Heart left ventricle (tissue), 16 donors: ENCODE measurements at regions of chr7 and their contacts with region 1.

Region 1: DNA sequence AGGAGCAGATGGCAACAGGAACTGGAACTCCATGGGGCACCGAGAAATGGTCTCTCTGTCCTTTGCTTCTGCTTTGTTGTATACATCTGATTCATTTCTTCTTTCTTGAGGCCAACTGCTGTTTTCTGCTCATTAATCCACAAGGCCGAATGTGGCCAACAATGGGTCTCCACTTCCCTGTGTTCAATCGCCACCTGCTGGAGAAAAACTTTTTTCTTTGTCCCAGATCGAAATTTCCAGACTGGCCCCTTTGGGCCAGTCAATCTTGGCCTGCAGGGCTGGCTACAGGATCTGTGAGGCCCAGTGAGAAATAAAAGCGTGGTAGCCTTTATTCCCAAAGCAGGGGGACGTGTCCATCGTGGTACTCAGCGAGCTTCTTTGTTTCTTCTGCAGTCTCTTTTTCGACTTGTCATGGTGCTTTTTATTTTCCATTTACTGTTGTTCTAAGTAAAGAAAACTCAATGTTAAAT is 58.8 kb downstream of the PARP12 start:
- DNase-seq: no peak
- ATAC-seq: no peak
- H3K4me3 ChIP-seq: no peak overlapping the region
- H3K27ac ChIP-seq: no peak overlapping the region
- H3K4me1 ChIP-seq: no peaks in the 10 kb centered on the region
- H3K27me3 ChIP-seq: no peaks in the 10 kb centered on the region
- CTCF ChIP-seq: peak in 10 of 12 donors; percentile 23 to 53 (median 43)
- POLR2A ChIP-seq: no peak

Region 2: GRCh38 chr7:139431010-139431409 is 572.9 kb before region 1 on chr7:
- intact Hi-C with region 1: loop called in 1 of 10 experiments (anchors 10 kb)
- DNase-seq: no peak
- ATAC-seq: peak in 1 of 4 donors; percentile 17
- H3K4me3 ChIP-seq: no peak overlapping the region
- H3K27ac ChIP-seq: peak overlapping the region in 4 of 12 donors; percentile 9 to 45 (median 24)
- H3K4me1 ChIP-seq: peaks cover 0 to 33% (median 16%) of the 10 kb centered on the region in 12 donors
- H3K27me3 ChIP-seq: no peaks in the 10 kb centered on the region
- CTCF ChIP-seq: no peak
- POLR2A ChIP-seq: no peak

Region 3: DNA sequence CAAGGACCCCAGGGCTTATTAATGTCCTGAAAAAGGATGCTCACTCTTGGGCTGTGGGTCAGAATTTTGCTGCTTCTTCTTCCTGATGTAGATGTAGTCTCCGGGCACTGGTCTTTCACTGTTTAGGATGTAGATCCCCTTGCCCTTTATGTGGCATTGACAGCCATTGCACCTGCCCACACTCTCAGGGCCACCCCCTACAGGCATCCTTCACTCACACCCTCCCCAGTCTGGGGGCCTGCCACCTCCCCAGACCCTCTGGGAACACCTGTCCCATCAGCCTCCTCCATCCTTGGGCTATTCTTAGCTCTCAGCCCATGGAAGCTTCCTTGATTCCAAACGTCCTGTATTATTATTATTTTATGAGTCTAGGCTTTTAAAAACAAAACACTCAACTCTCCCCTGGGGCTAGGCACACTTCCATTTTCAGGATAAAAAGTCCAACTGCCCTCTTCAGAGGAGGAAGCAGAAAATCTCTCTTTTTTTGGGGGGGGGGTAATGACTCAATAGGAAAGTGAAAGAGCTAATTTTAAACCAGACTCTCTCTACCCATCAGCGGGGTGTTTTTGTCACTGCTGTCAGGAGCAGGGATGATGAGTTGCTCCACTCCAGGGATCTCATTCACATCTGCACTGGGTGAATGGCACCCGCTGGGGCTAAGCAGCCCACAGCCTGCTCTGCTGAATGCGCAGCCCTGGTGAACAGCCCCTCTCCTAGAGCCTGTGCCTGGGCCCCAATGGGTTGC is 508.9 kb before region 1 on chr7:
- intact Hi-C with region 1: loop called (anchors 1 to 5 kb)
- DNase-seq: no peak
- ATAC-seq: peak in 1 of 4 donors; percentile 20
- H3K4me3 ChIP-seq: no peak overlapping the region
- H3K27ac ChIP-seq: no peak overlapping the region
- H3K4me1 ChIP-seq: peaks cover 0 to 15% (median 0%) of the 10 kb centered on the region in 12 donors
- H3K27me3 ChIP-seq: peaks cover 0 to 8% (median 0%) of the 10 kb centered on the region in 9 donors
- CTCF ChIP-seq: no peak
- POLR2A ChIP-seq: no peak

Region 4: GRCh38 chr7:139505563-139505962 is 498.4 kb before region 1 on chr7:
- intact Hi-C with region 1: loop called in 6 of 10 experiments (anchors 1 to 5 kb)
- DNase-seq: no peak
- ATAC-seq: no peak
- H3K4me3 ChIP-seq: no peak overlapping the region
- H3K27ac ChIP-seq: no peak overlapping the region
- H3K4me1 ChIP-seq: no peaks in the 10 kb centered on the region
- H3K27me3 ChIP-seq: peaks cover 0 to 4% (median 0%) of the 10 kb centered on the region in 9 donors
- CTCF ChIP-seq: peak in 3 of 12 donors; percentile 8 to 19 (median 12)
- POLR2A ChIP-seq: no peak

Region 5: GRCh38 chr7:139602143-139602722 is 401.7 kb before region 1 on chr7:
- intact Hi-C with region 1: loop called in 7 of 10 experiments (anchors 1 to 5 kb)
- DNase-seq: no peak
- ATAC-seq: peak in 3 of 4 donors; percentile 65 to 71 (median 68)
- H3K4me3 ChIP-seq: no peak overlapping the region
- H3K27ac ChIP-seq: no peak overlapping the region
- H3K4me1 ChIP-seq: peaks cover 0 to 32% (median 0%) of the 10 kb centered on the region in 12 donors
- H3K27me3 ChIP-seq: no peaks in the 10 kb centered on the region
- CTCF ChIP-seq: peak; percentile 30 to 64 (median 50)
- POLR2A ChIP-seq: no peak

Region 6: GRCh38 chr7:139620676-139621344 is 383.1 kb before region 1 on chr7:
- intact Hi-C with region 1: loop called in 8 of 10 experiments (anchors 1 to 10 kb)
- DNase-seq: peak in 1 of 5 donors; percentile 40
- ATAC-seq: peak in 1 of 4 donors; percentile 44
- H3K4me3 ChIP-seq: no peak overlapping the region
- H3K27ac ChIP-seq: no peak overlapping the region
- H3K4me1 ChIP-seq: peaks cover 0 to 9% (median 0%) of the 10 kb centered on the region in 12 donors
- H3K27me3 ChIP-seq: no peaks in the 10 kb centered on the region
- CTCF ChIP-seq: peak; percentile 38 to 63 (median 52)
- POLR2A ChIP-seq: no peak

Region 7: DNA sequence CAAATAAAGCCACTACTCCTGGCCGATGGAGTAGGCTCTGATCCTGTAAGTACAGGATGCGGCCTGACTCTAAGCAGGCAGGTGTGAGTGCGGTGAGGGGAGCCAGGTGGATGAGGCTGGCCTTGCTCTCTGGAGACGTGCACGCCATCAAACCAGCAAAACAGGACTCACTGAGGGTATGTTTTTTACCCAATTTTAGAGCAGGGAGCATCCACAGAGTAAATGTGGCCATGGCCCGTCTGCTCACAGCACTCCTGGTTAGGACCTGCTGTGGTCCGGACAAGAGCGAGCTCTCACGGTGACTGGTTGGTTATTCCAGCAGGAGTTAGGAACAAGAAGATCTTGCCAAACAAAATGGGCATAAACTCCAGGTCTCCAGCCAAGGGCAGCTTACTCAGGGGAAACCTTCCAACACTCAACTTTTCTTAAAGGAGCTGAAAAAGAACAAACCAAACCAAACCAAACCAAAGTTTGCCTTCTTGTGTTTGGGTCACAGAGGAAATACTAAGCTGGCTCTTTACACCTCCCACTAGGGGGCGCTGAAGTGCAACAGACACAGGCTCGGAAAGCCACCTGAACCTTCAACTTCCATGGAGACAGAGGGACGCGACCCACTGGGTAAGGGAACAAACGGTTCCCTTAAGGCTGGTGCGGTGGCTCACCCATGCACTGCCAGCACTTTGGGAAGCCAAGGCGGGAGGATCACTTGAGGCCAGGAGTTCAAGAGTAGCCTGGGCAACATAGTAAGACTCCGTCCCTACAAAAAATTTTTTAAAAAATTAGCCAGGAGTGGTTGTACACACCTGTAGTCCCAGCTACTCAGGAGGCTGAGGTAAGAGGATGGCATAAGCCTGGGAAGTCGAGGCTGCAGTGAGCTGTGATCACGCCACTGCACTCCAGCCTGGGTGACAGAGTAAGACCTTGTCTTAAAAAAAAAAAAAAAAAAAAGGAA is 358.1 kb before region 1 on chr7:
- intact Hi-C with region 1: loop called in 9 of 10 experiments (anchors 1 to 5 kb)
- DNase-seq: peak; percentile 83 to 90 (median 85)
- ATAC-seq: peak; percentile 53 to 71 (median 54)
- H3K4me3 ChIP-seq: no peak overlapping the region
- H3K27ac ChIP-seq: peak overlapping the region in 9 of 12 donors; percentile 5 to 83 (median 77)
- H3K4me1 ChIP-seq: peaks cover 0 to 53% (median 44%) of the 10 kb centered on the region in 12 donors
- H3K27me3 ChIP-seq: no peaks in the 10 kb centered on the region
- CTCF ChIP-seq: peak; percentile 84 to 95 (median 92)
- POLR2A ChIP-seq: peak in 1 of 2 donors; percentile 24